Gastrocnemius medialis (tissue), 4 donors: ENCODE measurements at regions of chr7 and their contacts with region 1.

Region 1: DNA sequence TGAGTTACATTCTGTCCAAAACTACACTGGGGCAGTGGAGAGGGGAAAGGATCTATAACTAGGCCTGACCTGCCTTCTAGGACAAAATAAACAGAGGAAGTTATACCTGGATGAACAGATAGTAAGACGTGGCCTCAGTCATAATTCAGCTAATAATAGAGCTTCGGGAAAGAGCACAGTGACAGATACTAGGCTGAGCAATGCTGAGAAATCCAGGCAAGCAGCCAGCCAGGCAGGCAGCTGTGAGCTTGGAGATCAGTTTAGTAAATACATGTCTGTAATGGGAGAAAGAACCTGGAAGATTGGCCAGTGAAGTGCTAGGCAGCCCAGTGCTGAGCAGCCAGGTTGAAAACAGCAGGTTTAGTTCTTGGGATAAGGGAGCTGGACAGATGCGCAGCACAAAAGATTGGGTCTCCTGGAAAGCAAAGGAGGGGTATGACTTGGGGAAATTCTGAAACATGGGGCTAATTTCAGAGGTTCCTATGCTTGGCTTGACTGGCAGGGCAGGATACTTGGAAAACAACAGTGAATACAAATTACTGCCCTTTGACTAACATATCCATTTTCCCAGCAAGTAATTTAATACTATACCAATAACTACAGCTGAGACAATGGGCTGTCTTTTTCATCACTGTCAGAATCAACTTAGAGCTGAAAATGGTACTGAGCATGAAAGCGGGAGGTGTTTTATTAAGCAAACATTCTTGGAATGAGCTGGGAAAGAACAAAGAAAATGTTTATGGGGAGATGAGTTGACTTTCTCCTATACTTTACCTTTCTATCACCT is 140.8 kb downstream of the DGKB start:
- DNase-seq: peak; percentile 86 to 93
- ATAC-seq: peak; percentile 99 to 100
- H3K4me3 ChIP-seq: peak overlapping the region in 1 of 4 donors; percentile 1
- H3K27ac ChIP-seq: peak overlapping the region; percentile 78 to 86 (median 84)
- H3K4me1 ChIP-seq: peaks cover 36 to 37% of the 10 kb centered on the region in 2 donors
- H3K27me3 ChIP-seq: no peaks in the 10 kb centered on the region
- CTCF ChIP-seq: no peak
- POLR2A ChIP-seq: no peak

Region 2: DNA sequence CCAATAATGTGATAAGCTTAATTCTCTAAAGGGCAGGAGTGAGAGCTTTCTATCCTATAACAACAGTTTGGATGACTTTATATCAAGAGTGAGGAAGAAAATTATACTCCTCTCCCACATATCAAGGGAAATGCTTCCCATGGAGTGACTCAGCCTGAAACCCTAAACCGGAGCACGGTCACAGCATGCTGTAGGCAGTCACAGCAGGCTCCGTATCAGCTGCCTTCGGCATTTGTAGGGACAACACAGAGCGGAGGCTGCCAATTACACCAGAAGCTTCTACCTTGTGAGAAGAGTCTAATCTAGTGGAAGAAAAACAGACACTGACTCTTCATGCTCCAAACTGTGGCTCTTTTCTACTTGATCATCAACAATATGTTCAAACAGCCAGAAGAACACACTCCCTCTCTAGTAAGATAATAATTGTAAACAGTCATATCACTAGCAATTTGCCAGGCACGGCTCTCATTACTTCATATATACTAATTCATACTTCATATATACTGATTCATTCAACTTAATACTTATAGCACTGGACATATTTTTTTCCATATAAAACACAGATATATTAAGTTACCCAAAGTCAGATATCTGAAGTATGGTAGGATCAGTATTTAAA is 75.0 kb after region 1 on chr7:
- in situ Hi-C with region 1: no loop called
- intact Hi-C with region 1: loop called (anchors 1 kb)
- DNase-seq: peak; percentile 92 to 94
- ATAC-seq: peak; percentile 89 to 91
- H3K4me3 ChIP-seq: peak overlapping the region; percentile 5 to 28 (median 24)
- H3K27ac ChIP-seq: peak overlapping the region; percentile 80 to 95 (median 92)
- H3K4me1 ChIP-seq: peaks cover 26 to 40% of the 10 kb centered on the region in 2 donors
- H3K27me3 ChIP-seq: no peaks in the 10 kb centered on the region
- CTCF ChIP-seq: no peak
- POLR2A ChIP-seq: peak in 1 of 2 donors; percentile 55